ENCODE measurements at regions of chr10 and their contacts with region 1.

Region 1: DNA sequence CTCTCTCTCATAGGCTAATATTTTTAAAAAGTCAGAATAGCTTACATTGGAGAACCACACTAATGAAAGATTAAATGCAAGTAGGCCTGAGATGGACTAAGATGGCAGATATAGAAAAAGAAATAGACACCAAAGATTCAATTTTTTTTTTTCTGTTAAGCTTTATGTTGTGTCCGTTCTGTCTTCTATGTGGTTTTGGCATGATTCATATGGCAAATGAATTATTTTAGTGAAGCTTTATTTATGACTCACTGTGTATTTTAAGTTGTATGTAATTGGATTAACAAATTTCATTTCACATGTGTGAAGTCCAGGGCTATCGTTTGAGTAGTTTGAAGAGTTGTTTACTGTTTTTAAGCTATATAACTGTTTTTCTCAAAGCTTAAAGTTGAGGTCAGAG is 214.8 kb downstream of the CAMK1D start:
- DNase-seq: no peak
- H3K4me3 ChIP-seq: no peak overlapping the region
- CTCF ChIP-seq: no peak

Region 2: GRCh38 chr10:12455774-12456173 is 108.4 kb before region 1 on chr10:
- in situ Hi-C with region 1: loop called (anchors 5 kb)
- DNase-seq: no peak
- H3K4me3 ChIP-seq: no peak overlapping the region
- CTCF ChIP-seq: no peak

Measured in astrocyte of the cerebellum (primary cell).